GM18951 (cell line): ENCODE measurements at regions of chr4 and their contacts with region 1.

Region 1: GRCh38 chr4:40316782-40317635 is 18.1 kb upstream of the CHRNA9 start:
- POLR2A ChIP-seq: no peak

Region 2: DNA sequence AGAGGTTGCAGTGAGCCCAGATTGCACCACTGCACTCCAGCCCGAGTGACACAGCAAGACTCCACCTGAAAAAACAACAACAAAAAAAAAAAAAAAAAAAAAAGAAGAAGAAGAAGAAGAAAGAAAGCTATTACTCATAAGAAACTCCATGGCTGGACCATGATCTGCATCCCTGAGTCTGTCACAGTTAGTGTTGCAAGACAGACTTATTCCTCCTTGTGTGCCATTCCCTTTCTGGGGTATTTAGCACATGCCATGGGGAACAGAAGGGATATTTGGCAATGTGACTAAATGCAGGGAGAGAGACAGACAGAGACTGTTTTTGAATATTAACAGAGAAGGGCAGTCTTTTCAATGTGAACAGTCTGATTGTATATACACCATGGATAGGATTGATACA is 322.6 kb before region 1 on chr4:
- in situ Hi-C with region 1: no loop called
- POLR2A ChIP-seq: no peak

Region 3: GRCh38 chr4:40056716-40057585 is 260.1 kb before region 1 on chr4 and contains the start of gene N4BP2:
- in situ Hi-C with region 1: loop called (anchors 10 kb)
- POLR2A ChIP-seq: peak; percentile 62